T-cell (primary cell): ENCODE measurements at regions of chr21 and their contacts with region 1.

Region 1: GRCh38 chr21:41009398-41010100 is 158.4 kb upstream of the BACE2 start:
- DNase-seq: no peak
- ATAC-seq: no peak
- H3K4me3 ChIP-seq: no peak overlapping the region
- H3K4me3 Mint-ChIP-seq: no peak overlapping the region
- H3K27ac ChIP-seq: no peak overlapping the region
- H3K27ac Mint-ChIP-seq: no peak overlapping the region
- H3K4me1 ChIP-seq: no peaks in the 10 kb centered on the region
- H3K4me1 Mint-ChIP-seq: no peaks in the 10 kb centered on the region
- H3K27me3 ChIP-seq: peaks cover 0 to 4% of the 10 kb centered on the region in 2 experiments
- H3K27me3 Mint-ChIP-seq: peaks cover 10 to 12% of the 10 kb centered on the region in 2 donors

Region 2: GRCh38 chr21:41024753-41025254 is 15.3 kb after region 1 on chr21:
- CTCF ChIA-PET with region 1: no interaction called
- POLR2A ChIA-PET with region 1: interaction called in 1 of 2 experiments, 12 read pairs
- DNase-seq: no peak
- ATAC-seq: no peak
- H3K4me3 ChIP-seq: no peak overlapping the region
- H3K4me3 Mint-ChIP-seq: no peak overlapping the region
- H3K27ac ChIP-seq: no peak overlapping the region
- H3K27ac Mint-ChIP-seq: no peak overlapping the region
- H3K4me1 ChIP-seq: no peaks in the 10 kb centered on the region
- H3K4me1 Mint-ChIP-seq: no peaks in the 10 kb centered on the region
- H3K27me3 ChIP-seq: no peaks in the 10 kb centered on the region
- H3K27me3 Mint-ChIP-seq: peaks cover 3 to 9% of the 10 kb centered on the region in 2 donors

Region 3: GRCh38 chr21:41425954-41426675 is 416.6 kb after region 1 on chr21 and contains the start of gene MX1:
- CTCF ChIA-PET with region 1: no interaction called
- POLR2A ChIA-PET with region 1: no interaction called
- DNase-seq: peak; percentile 74 to 91 (median 88)
- ATAC-seq: peak; percentile 97 to 99 (median 98)
- H3K4me3 ChIP-seq: peak within 1 kb of the TSS; percentile 61 to 96
- H3K4me3 Mint-ChIP-seq: peak within 1 kb of the TSS; percentile 94 to 96 (median 94)
- H3K27ac ChIP-seq: peak within 1 kb of the TSS; percentile 66
- H3K27ac Mint-ChIP-seq: peak within 1 kb of the TSS; percentile 97 to 98
- H3K4me1 ChIP-seq: peaks cover 5 to 28% of the 10 kb centered on the region in 2 experiments
- H3K4me1 Mint-ChIP-seq: peaks cover 50 to 79% (median 68%) of the 10 kb centered on the region in 3 donors
- H3K27me3 ChIP-seq: no peaks in the 10 kb centered on the region
- H3K27me3 Mint-ChIP-seq: no peaks in the 10 kb centered on the region
- total RNA-seq, gene MX1: 55.2 to 82.5 (median 68.7) TPM